ENCODE measurements at regions of chr20 and their contacts with region 1.

Region 1: DNA sequence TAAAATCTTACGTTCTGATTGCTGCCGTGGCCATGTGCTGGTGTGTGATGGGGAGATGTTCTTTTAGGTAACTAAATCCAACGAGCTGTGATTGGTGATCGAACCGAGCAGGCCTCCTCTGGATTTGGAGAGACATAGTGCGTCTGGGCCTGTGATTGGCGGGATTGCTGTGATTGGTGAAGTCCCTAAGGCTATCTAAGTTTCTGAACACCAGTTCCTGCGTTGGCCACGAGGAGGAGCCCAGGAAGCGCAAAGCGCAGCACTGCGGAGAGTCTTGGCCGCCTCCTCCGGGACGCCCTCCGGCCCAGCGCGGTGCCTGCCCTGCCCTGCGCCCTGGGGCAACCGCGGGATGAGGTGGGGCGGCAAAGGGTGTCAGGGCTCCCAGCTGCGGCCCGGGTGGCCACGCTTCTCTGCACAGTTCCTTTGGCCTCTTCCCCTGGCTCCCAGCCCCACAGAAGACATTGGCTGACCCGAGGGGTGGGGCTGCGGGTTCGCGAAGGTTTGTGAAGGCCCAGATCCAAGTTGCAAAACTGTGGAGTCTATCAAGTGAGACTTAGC is 33.0 kb downstream of the HNF4A start:
- DNase-seq: no peak
- ATAC-seq: peak; percentile 93
- H3K4me3 ChIP-seq: no peak overlapping the region
- H3K27ac ChIP-seq: no peak overlapping the region
- H3K4me1 ChIP-seq: no peaks in the 10 kb centered on the region
- H3K27me3 ChIP-seq: peaks cover 1 to 2% of the 10 kb centered on the region in 2 experiments; a peak in 2 of 4 replicates
- CTCF ChIP-seq: peak; percentile 78 to 90 (median 88)
- EP300 ChIP-seq: no peak
- POLR2A ChIP-seq: no peak
- RAD21 ChIP-seq: peak; percentile 73

Region 2: GRCh38 chr20:44279228-44279627 is 109.3 kb before region 1 on chr20:
- CTCF ChIA-PET with region 1: no interaction called
- POLR2A ChIA-PET with region 1: no interaction called
- RAD21 ChIA-PET with region 1: no interaction called
- SMC1A ChIA-PET with region 1: no interaction called
- in situ Hi-C with region 1: no loop called
- intact Hi-C with region 1: no loop called
- DNase-seq: no peak
- ATAC-seq: no peak
- H3K4me3 ChIP-seq: no peak overlapping the region
- H3K27ac ChIP-seq: no peak overlapping the region
- H3K4me1 ChIP-seq: no peaks in the 10 kb centered on the region; the same call in 1 of the 2 replicates
- H3K27me3 ChIP-seq: no peaks in the 10 kb centered on the region; a peak in 1 of 4 replicates
- CTCF ChIP-seq: no peak
- EP300 ChIP-seq: no peak
- POLR2A ChIP-seq: no peak
- RAD21 ChIP-seq: no peak

Region 3: GRCh38 chr20:44460795-44461141 is 72.2 kb after region 1 on chr20:
- CTCF ChIA-PET with region 1: interaction called, 9 read pairs
- POLR2A ChIA-PET with region 1: no interaction called
- RAD21 ChIA-PET with region 1: interaction called, 3 read pairs
- SMC1A ChIA-PET with region 1: interaction called, 4 read pairs
- in situ Hi-C with region 1: no loop called
- intact Hi-C with region 1: loop called (anchors 2 kb)
- DNase-seq: no peak
- ATAC-seq: peak; percentile 64
- H3K4me3 ChIP-seq: no peak overlapping the region
- H3K27ac ChIP-seq: no peak overlapping the region
- H3K4me1 ChIP-seq: no peaks in the 10 kb centered on the region
- H3K27me3 ChIP-seq: no peaks in the 10 kb centered on the region
- CTCF ChIP-seq: peak; percentile 24 to 51 (median 40); a peak in 5 of 6 replicates
- EP300 ChIP-seq: no peak
- POLR2A ChIP-seq: no peak
- RAD21 ChIP-seq: peak; percentile 52

Region 4: DNA sequence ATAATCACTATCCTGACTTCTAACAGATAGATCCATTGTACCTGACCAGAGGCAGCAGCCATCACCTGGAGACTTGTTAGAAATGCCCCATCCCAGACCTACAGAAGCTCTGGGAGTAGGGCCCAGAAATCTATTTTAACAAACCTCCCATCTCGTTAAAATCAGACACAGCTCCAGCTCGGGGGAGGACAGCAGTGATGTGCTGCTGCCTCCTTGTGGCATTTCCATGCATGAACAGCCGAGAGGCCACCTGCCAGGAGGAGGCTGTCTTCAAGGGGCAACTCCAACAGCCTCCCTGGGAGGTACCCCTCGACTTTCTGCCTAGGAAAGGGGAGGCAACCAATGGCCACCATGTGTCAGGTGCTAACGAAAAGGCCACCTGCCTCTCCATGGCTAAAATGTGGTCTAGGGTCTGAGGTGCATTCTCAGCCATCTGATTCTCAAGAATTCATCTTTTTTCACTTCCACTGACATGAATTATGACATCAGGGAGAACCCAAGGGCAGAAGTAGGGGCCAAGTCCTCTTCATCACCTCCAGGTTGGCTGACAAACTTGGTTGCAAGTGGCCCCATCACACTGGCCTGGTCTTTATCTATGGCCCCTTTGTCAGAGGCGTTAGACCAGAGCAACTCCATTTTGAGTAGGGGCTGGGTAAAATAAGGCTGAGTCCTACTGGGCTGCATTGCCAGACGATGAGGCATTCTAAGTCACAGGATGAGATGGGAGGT is 345.0 kb after region 1 on chr20:
- CTCF ChIA-PET with region 1: interaction called, 4 read pairs
- POLR2A ChIA-PET with region 1: no interaction called
- RAD21 ChIA-PET with region 1: interaction called, 3 read pairs
- SMC1A ChIA-PET with region 1: no interaction called
- in situ Hi-C with region 1: no loop called
- intact Hi-C with region 1: loop called (anchors 5 kb)
- DNase-seq: no peak
- ATAC-seq: peak; percentile 91
- H3K4me3 ChIP-seq: no peak overlapping the region
- H3K27ac ChIP-seq: no peak overlapping the region
- H3K4me1 ChIP-seq: peaks cover 7% of the 10 kb centered on the region
- H3K27me3 ChIP-seq: no peaks in the 10 kb centered on the region
- CTCF ChIP-seq: peak; percentile 90 to 96 (median 91); a peak in 5 of 6 replicates
- EP300 ChIP-seq: no peak
- POLR2A ChIP-seq: no peak
- RAD21 ChIP-seq: peak; percentile 83